A549 (cell line): ENCODE measurements at regions of chr19 and their contacts with region 1.

Region 1: GRCh38 chr19:38304866-38305429 is 897 bp downstream of the C19orf33 start:
- DNase-seq: peak; percentile 100
- ATAC-seq: peak; percentile 60 to 85
- H3K4me3 ChIP-seq: peak overlapping the region; percentile 60
- H3K27ac ChIP-seq: peak overlapping the region; percentile 92 to 95
- H3K4me1 ChIP-seq: peaks cover 50% of the 10 kb centered on the region
- CTCF ChIP-seq: no peak
- EP300 ChIP-seq: no peak; a peak in 1 of 5 replicates
- POLR2A ChIP-seq: peak; percentile 82
- RAD21 ChIP-seq: peak; percentile 1 to 43; a peak in 2 of 5 replicates

Region 2: DNA sequence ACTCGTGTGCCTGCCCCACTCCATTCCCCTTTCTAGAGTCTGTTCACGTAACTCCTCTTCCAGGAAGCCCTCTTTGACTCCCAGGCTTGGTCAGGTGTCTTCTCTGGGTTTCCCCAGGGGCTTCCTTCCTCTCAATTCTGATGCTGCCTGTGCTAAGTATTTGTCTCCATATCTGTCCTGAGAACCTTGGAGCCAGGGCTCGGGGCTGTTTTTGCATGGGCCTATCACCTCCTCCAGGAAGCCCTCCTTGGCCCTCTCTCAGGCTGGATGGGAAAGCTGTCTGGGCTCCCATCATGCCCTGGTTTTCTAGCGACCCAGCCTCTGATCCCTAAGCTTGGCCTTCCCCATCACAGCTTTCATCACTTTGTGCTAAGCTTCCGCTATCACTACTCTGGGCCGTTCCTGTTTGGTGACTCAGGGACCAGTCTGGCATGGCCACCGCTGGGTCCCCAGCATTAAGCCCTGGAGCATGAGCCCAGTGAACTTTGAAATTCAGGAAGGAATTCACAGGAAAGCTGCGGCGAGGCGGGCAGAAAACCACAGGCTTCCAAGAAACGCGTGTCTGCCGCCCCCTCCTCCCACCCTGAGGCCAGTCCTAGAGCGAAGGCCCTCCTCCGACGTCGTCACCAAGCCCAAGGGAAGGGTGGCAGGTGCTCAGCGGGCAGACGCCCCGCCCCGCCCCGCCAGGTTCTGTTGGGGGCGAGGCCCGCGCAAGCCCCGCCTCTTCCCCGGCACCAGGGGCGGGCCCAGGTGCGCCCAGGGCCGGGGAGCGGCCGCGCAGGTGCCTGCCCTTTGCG is 41.1 kb before region 1 on chr19:
- CTCF ChIA-PET with region 1: interaction called, 5 read pairs
- POLR2A ChIA-PET with region 1: interaction called, 127 read pairs
- DNase-seq: peak; percentile 78 to 87
- ATAC-seq: peak; percentile 64 to 66
- H3K4me3 ChIP-seq: peak overlapping the region; percentile 67
- H3K27ac ChIP-seq: peak overlapping the region; percentile 89 to 91
- H3K4me1 ChIP-seq: peaks cover 51% of the 10 kb centered on the region
- CTCF ChIP-seq: no peak
- EP300 ChIP-seq: no peak; a peak in 1 of 5 replicates
- POLR2A ChIP-seq: no peak
- RAD21 ChIP-seq: no peak; a peak in 1 of 5 replicates

Region 3: GRCh38 chr19:38290631-38291157 is 14.3 kb before region 1 on chr19:
- CTCF ChIA-PET with region 1: interaction called, 11 read pairs
- POLR2A ChIA-PET with region 1: interaction called, 16 read pairs
- DNase-seq: peak in 1 of 2 experiments; percentile 61
- ATAC-seq: peak; percentile 42 to 58
- H3K4me3 ChIP-seq: no peak overlapping the region
- H3K27ac ChIP-seq: peak overlapping the region; percentile 9 to 62; a peak in 3 of 6 replicates
- H3K4me1 ChIP-seq: peaks cover 16% of the 10 kb centered on the region
- CTCF ChIP-seq: no peak
- EP300 ChIP-seq: no peak
- POLR2A ChIP-seq: no peak
- RAD21 ChIP-seq: no peak

Region 4: GRCh38 chr19:38374429-38375176 is 69.7 kb after region 1 on chr19 and contains the start of gene PSMD8:
- CTCF ChIA-PET with region 1: no interaction called
- POLR2A ChIA-PET with region 1: interaction called, 15 read pairs
- DNase-seq: peak; percentile 100
- ATAC-seq: peak; percentile 91 to 97
- H3K4me3 ChIP-seq: peak within 1 kb of the TSS; percentile 78
- H3K27ac ChIP-seq: peak within 1 kb of the TSS; percentile 88 to 91
- H3K4me1 ChIP-seq: peaks cover 17% of the 10 kb centered on the region
- CTCF ChIP-seq: peak; percentile 40
- EP300 ChIP-seq: no peak
- POLR2A ChIP-seq: peak; percentile 100
- RAD21 ChIP-seq: peak in 1 of 2 experiments; percentile 35; a peak in 3 of 5 replicates
- polyA plus RNA-seq, gene PSMD8: 437 and 469 TPM in 2 replicates

Region 5: DNA sequence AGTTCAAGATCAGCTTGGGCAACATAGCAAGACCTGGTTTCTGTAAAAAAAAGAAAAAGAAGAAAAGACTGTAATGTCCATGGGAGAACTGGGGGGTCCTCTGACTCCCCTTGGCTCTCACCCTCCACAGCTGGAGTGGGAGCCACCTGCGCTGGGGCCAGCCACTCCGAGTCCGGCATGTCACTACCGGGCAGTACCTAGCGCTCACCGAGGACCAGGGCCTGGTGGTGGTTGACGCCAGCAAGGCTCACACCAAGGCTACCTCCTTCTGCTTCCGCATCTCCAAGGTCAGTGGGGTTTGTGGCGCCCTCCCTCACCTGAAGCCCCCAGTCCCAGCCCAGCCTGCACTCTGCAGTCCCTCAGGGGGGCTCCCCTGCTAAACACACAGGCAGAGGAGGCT is 143.3 kb after region 1 on chr19:
- CTCF ChIA-PET with region 1: no interaction called
- POLR2A ChIA-PET with region 1: no interaction called
- DNase-seq: no peak
- ATAC-seq: no peak
- H3K4me3 ChIP-seq: no peak overlapping the region
- H3K27ac ChIP-seq: no peak overlapping the region
- H3K4me1 ChIP-seq: no peaks in the 10 kb centered on the region
- CTCF ChIP-seq: no peak
- EP300 ChIP-seq: no peak
- POLR2A ChIP-seq: no peak
- RAD21 ChIP-seq: no peak

Region 6: DNA sequence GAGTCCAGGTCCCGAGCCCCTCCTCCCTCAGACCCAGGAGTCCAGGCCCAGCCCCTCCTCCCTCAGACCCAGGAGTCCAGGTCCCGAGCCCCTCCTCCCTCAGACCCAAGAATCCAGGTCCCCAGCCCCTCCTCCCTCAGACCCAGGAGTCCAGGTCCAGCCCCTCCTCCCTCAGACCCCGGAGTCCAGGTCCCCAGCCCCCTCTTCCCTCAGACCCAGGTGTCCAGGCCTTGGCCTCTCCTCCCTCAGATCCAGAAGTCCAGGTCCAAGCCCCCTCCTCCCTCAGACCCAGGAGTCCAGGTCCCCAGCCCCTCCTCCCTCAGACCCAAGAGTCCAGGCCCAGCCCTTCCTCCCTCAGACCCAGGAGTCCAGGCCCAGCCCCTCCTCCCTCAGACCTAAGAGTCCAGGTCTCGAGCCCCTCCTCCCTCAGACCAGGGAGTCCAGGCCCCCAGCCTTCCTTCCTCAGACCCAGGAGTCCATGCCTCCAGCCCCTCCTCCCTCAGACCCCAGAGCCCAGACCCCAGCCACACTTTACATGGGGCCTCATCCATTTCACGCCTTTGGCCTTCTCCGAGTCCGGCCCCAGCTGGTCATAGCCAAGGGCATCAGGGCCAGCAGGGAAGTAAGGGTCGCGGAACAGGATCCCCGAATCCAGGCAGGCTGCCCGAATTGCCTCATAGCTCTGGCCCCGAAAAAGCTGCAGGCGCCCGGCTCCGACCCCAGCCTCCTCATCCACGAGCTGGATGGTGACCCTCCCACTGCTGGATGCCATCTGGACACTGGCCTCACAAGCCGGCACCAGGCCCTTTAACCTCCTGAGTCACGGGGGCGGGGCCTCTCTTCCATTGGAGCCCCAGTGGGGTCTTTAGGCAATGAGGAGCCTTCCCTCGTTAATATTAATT is 438.7 kb after region 1 on chr19:
- CTCF ChIA-PET with region 1: no interaction called
- POLR2A ChIA-PET with region 1: no interaction called
- DNase-seq: no peak
- ATAC-seq: peak; percentile 1 to 14; a peak in 2 of 6 replicates
- H3K4me3 ChIP-seq: no peak overlapping the region
- H3K27ac ChIP-seq: peak overlapping the region in 1 of 2 experiments; percentile 45; a peak in 3 of 6 replicates
- H3K4me1 ChIP-seq: peaks cover 4% of the 10 kb centered on the region; the same call in 1 of the 3 replicates
- CTCF ChIP-seq: no peak
- EP300 ChIP-seq: no peak
- POLR2A ChIP-seq: no peak; the same call in 1 of the 2 replicates
- RAD21 ChIP-seq: no peak

Region 7: GRCh38 chr19:38792250-38793111 is 487.5 kb after region 1 on chr19:
- CTCF ChIA-PET with region 1: no interaction called
- POLR2A ChIA-PET with region 1: interaction called, 19 read pairs
- DNase-seq: no peak
- ATAC-seq: peak in 1 of 2 experiments; percentile 13; a peak in 2 of 6 replicates
- H3K4me3 ChIP-seq: no peak overlapping the region
- H3K27ac ChIP-seq: peak overlapping the region in 1 of 2 experiments; percentile 54; a peak in 3 of 6 replicates
- H3K4me1 ChIP-seq: peaks cover 11% of the 10 kb centered on the region
- CTCF ChIP-seq: no peak
- EP300 ChIP-seq: no peak
- POLR2A ChIP-seq: no peak
- RAD21 ChIP-seq: no peak